Transverse colon (tissue), 4 donors: ENCODE measurements at regions of chr19 and their contacts with region 1.

Region 1: DNA sequence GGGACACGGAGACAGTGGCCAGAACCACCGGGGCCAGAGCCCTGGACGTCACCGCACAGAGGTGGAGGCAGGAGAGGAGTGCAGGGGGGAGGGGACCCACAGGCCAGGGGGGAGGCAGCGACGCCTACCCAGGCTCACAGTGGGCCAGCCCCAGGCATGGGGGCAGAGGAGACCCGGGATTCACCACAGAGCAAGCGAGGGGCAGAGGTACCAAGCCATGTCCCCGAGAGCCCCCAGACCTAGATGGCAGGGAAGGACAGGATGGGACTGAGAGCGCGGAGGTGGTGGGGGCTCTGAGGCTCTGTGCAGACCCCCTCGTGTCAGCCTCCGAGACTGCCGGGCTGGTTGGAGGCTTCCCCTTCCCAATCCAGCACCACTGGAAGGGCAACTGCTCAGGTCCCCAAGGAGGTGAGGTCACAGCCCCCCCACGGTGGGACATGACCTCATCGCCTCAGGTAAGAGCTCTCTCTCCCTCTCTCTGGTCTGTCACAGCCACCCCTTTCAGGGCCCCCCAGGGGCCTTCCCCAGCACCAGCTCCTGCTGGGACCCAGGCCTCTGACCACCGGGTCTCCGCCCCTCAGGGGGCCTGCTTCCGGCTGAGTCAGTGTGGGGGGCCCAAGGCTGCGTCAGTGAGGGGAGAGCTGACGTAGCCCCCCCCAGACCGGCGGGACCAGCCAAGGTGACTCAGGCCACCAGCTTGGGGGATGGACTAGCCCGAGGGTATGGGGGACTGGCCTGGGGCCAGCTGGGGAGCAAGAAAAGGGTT is 2.2 kb upstream of the IL11 start:
- DNase-seq: no peak
- H3K4me3 ChIP-seq: no peak overlapping the region
- H3K27ac ChIP-seq: no peak overlapping the region
- H3K4me1 ChIP-seq: peaks cover 3 to 34% (median 20%) of the 10 kb centered on the region in 4 donors
- H3K27me3 ChIP-seq: peaks cover 90% of the 10 kb centered on the region
- CTCF ChIP-seq: no peak
- EP300 ChIP-seq: no peak
- POLR2A ChIP-seq: no peak

Region 2: DNA sequence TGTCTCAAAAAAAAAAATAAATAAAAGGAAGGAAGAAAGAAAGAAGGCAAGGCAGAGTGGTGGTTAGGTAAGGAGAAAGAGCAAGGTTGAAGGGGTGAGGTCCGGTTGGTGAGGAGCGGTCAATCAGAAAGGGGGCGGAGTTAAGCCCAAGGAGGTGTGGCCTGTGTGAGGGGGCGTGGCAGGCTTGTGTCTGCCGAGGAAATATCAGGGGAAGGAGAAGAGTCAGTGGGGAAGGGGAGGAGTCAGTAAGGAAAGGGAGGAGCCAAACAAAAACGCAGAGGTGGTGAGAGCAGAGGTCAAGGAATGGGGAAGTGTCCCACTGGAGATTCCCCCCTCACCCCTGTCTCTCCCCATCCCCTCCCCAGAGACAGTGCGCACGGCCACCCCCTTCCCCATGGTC is 1457.5 kb before region 1 on chr19:
- in situ Hi-C with region 1: no loop called
- intact Hi-C with region 1: no loop called
- DNase-seq: no peak
- H3K4me3 ChIP-seq: no peak overlapping the region
- H3K27ac ChIP-seq: no peak overlapping the region
- H3K4me1 ChIP-seq: no peaks in the 10 kb centered on the region
- H3K27me3 ChIP-seq: peaks cover 35% of the 10 kb centered on the region
- CTCF ChIP-seq: no peak
- EP300 ChIP-seq: no peak
- POLR2A ChIP-seq: no peak

Region 3: GRCh38 chr19:55116232-55116858 is 256.2 kb before region 1 on chr19:
- in situ Hi-C with region 1: no loop called
- intact Hi-C with region 1: no loop called
- DNase-seq: peak; percentile 69
- H3K4me3 ChIP-seq: peak overlapping the region; percentile 69 to 95 (median 80)
- H3K27ac ChIP-seq: peak overlapping the region; percentile 92 to 96 (median 95)
- H3K4me1 ChIP-seq: peaks cover 30 to 50% (median 45%) of the 10 kb centered on the region in 4 donors
- H3K27me3 ChIP-seq: no peaks in the 10 kb centered on the region
- CTCF ChIP-seq: no peak
- EP300 ChIP-seq: no peak
- POLR2A ChIP-seq: peak; percentile 54

Region 4: DNA sequence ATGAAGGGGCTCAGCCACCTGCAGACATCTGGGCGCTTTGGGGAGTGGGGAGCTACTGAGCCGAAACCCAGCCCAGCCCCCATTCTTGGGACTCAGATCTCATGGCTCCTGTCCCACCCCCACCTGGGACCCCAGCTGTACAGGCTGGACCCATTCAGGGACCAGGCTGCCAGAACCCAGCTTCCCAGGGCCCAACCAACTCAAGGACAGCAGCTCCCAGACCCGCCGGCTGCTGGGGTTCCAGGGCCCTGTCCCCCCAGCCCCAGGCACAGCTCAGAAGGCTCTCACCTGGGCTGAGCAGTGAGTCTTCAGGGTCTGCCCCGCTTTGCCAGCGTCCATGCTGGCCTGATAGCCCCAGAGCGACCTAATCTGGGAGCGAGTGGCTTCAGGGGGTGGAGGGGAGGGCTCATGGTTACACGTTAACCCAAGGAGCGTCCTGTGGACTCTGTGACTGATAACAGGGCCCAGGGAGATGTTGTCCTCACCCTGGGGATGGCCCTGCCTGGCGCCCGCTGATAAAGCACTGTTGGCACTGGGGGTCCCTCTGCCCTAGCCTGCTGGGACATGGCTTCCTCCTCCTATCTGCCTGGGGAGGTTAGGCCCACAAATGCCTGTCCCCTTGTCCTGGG is 144.0 kb before region 1 on chr19 and contains the start of gene TMEM86B:
- in situ Hi-C with region 1: no loop called
- intact Hi-C with region 1: loop called (anchors 1 kb)
- DNase-seq: no peak
- H3K4me3 ChIP-seq: no peak within 1 kb of the TSS
- H3K27ac ChIP-seq: peak within 1 kb of the TSS in 1 of 4 donors; percentile 15
- H3K4me1 ChIP-seq: peaks cover 0 to 6% (median 0%) of the 10 kb centered on the region in 4 donors
- H3K27me3 ChIP-seq: no peaks in the 10 kb centered on the region
- CTCF ChIP-seq: no peak
- EP300 ChIP-seq: no peak
- POLR2A ChIP-seq: no peak
- total RNA-seq, gene TMEM86B: 2.0 to 40.8 (median 4.4) TPM

Region 5: DNA sequence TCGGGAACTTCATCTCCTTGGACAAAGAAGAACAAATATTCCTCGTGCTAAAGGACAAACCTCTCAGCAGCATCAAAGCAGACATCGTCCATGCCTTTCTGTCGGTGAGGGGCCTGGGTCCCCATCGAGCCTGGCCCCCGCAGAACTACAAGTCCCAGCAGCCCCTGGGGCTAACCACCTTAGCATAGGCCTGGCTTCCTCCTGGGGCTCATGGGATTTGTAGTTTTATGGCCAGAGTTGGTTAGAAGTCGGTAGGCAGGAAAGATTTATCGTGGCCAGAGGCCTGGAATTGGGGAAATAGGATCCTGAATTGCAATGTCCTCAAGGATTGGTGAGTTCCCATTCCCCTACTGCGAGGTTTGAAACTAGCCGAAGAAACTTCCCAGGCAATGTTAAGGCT is 67.0 kb before region 1 on chr19:
- in situ Hi-C with region 1: no loop called
- intact Hi-C with region 1: no loop called
- DNase-seq: no peak
- H3K4me3 ChIP-seq: no peak overlapping the region
- H3K27ac ChIP-seq: no peak overlapping the region
- H3K4me1 ChIP-seq: peaks cover 4 to 10% (median 9%) of the 10 kb centered on the region in 4 donors
- H3K27me3 ChIP-seq: no peaks in the 10 kb centered on the region
- CTCF ChIP-seq: no peak
- EP300 ChIP-seq: no peak
- POLR2A ChIP-seq: no peak

Region 6: GRCh38 chr19:55418185-55418584 is 45.7 kb after region 1 on chr19:
- in situ Hi-C with region 1: no loop called
- intact Hi-C with region 1: no loop called
- DNase-seq: peak; percentile 64
- H3K4me3 ChIP-seq: no peak overlapping the region
- H3K27ac ChIP-seq: no peak overlapping the region
- H3K4me1 ChIP-seq: no peaks in the 10 kb centered on the region
- H3K27me3 ChIP-seq: peaks cover 12% of the 10 kb centered on the region
- CTCF ChIP-seq: peak; percentile 55 to 77 (median 63)
- EP300 ChIP-seq: no peak
- POLR2A ChIP-seq: no peak